Adrenal gland (tissue), 19 donors: ENCODE measurements at regions of chr3 and their contacts with region 1.

Region 1: GRCh38 chr3:71875461-71875947 is 90.6 kb upstream of the PROK2 start:
- DNase-seq: peak; percentile 83 to 92 (median 86)
- H3K4me3 ChIP-seq: no peak overlapping the region
- H3K27ac ChIP-seq: no peak overlapping the region
- H3K4me1 ChIP-seq: peaks cover 0 to 4% of the 10 kb centered on the region in 2 donors
- H3K27me3 ChIP-seq: no peaks in the 10 kb centered on the region
- CTCF ChIP-seq: peak; percentile 76 to 94 (median 88)
- POLR2A ChIP-seq: no peak

Region 2: DNA sequence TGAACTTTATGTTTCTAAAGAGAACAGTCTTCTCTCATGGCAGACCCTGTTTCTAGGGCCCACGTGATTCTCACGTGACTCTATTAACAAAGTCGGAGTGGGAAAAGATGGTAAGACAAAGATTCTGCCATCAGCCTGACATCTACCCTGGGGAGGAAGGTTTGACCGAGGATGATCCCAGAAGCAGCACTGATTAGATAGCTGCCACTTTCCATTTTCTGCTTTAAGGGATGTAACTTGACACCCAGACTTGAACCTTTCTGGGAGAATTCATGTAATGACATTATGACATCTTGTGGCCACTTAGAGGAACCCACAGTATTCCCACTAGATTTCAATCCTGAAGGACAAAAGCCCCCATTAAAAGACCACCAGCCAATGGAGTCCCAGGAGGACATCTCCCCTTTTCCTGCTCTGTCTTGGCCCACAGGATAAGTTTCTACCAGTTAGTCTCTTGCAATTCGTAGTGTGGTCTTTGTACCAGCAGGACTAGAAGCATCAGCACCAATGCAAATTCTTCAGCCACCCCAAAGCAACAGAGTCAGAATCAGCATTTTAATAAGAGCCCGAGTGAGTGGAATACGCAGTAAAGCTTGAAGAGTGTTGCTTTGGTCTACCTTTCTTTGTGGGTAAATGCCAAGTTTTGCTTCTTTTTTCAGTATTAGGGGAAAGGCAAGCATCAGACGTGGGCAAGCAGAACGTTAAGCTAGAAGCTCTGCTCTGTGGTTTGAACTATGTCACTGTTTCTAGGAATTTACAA is 389.9 kb after region 1 on chr3:
- intact Hi-C with region 1: loop called in 1 of 2 experiments (anchors 10 kb)
- DNase-seq: no peak
- H3K4me3 ChIP-seq: no peak overlapping the region
- H3K27ac ChIP-seq: no peak overlapping the region
- H3K4me1 ChIP-seq: peaks cover 10 to 18% of the 10 kb centered on the region in 2 donors
- H3K27me3 ChIP-seq: no peaks in the 10 kb centered on the region
- CTCF ChIP-seq: peak in 5 of 6 experiments; percentile 14 to 43 (median 27)
- POLR2A ChIP-seq: no peak